AG04449 (cell line): ENCODE measurements at regions of chr1 and their contacts with region 1.

Region 1: GRCh38 chr1:59947047-59947938 is 20.7 kb upstream of the CYP2J2 start:
- DNase-seq: peak; percentile 9
- H3K4me3 ChIP-seq: no peak overlapping the region
- CTCF ChIP-seq: peak; percentile 96

Region 2: DNA sequence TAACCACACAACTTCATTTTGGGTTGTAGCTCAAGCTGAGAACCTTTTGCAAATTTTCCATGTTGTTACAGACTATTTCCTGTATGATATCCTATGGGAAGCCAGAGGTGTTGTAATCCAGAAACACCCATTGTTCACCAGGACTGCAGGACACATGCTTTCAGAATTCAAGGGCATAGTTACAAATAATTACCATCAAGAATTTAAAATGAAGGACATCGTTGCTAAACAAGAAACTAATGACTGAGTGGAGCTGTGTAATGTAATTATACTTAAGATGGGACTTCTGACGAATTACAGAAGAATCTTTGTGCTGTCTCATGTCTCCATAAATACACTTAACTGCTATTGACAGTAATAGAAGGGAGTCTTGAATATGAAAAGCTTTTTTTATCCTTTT is 180.2 kb before region 1 on chr1:
- CTCF ChIA-PET with region 1: interaction called, 17 read pairs
- POLR2A ChIA-PET with region 1: no interaction called
- DNase-seq: no peak
- H3K4me3 ChIP-seq: no peak overlapping the region
- CTCF ChIP-seq: no peak

Region 3: DNA sequence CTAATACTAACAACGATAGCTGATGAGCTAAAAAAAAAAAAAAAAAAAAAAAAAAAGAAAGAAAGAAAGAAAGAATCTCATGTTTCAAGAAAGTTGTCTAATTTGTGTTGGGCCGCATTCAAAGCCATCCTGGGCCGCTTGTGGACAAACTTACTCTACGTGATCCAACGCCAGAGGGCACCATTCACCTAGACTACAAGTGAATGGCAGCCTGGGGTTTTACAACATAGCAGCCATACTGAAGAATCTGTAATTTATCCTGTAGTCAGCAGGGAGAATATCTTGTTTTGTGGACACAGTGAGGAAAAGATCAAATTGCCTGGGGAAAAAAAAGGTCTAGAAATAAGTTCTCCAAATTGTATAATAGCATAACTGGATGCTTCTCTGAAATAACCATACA is 67.7 kb before region 1 on chr1:
- CTCF ChIA-PET with region 1: interaction called, 42 read pairs
- POLR2A ChIA-PET with region 1: no interaction called
- DNase-seq: no peak
- H3K4me3 ChIP-seq: no peak overlapping the region
- CTCF ChIP-seq: peak; percentile 49